ENCODE measurements at regions of chr3 and their contacts with region 1.

Region 1: DNA sequence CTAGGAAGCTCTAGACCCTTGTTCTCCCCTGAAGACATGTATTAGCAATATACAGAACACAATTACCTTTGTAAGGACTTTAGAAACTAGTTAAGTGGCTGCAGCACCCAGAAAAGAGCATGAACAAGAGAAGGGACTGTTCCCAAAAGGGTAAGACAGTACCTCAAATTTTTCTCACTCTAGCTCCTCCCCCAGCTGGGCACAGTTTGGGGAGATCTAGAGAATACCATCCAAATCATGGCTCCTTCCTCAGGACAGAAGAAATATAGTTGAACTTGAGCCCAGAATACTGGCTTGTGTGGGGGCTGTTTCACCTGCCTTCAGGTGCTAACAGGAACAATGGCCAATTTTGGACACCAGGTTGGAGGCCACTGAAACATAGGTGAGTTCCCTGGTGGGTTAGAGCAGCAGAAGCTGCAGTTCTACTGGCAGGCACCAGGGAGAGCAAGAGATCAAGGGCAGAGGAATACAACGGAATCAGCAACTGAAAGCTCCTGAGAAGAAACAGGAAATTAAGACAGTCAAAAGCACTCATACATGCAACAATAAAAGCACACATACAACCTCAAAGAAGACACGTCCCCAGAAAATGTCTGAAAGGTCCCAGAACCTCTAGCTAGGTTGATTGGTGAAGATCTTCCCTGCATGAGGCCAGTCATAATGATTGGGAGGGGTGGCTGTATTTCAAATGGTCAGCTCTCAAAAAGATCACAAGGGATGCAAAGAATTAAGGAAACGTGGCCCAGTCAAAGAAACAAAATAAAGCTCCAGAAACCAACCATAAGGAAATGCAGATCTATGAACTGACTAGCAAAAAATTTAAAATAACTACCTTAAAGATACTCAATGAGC is 104.9 kb upstream of the ASB14 start:
- DNase-seq: peak; percentile 20 to 74 (median 45)
- ATAC-seq: peak; percentile 93 to 99 (median 98)
- H3K4me3 ChIP-seq: no peak overlapping the region
- H3K4me3 Mint-ChIP-seq: peak overlapping the region; percentile 0 to 23 (median 4)
- H3K27ac ChIP-seq: no peak overlapping the region
- H3K27ac Mint-ChIP-seq: peak overlapping the region; percentile 14 to 77
- H3K4me1 ChIP-seq: peaks cover 0 to 3% of the 10 kb centered on the region in 2 experiments
- H3K4me1 Mint-ChIP-seq: peaks cover 16 to 17% (median 16%) of the 10 kb centered on the region in 3 donors
- H3K27me3 ChIP-seq: no peaks in the 10 kb centered on the region
- H3K27me3 Mint-ChIP-seq: no peaks in the 10 kb centered on the region

Region 2: DNA sequence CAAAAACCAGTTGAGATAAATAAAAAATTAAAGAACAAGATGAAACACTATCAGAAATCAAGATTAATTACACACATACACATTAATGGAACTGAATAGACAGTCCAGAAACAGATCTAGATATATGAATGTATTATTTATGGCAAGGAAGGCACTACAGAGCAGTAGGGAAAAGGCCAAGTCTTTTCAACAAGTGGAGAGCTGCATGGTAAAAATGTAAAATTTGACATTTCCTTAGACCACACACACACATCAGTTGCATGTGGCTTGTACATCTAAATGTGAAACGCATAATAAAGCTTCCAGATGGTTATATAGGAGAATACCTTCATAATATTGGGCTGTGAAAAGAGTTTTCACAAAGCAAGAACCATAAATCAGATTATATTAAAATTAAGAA is 47.1 kb before region 1 on chr3:
- CTCF ChIA-PET with region 1: interaction called in 1 of 2 experiments, 10 read pairs
- POLR2A ChIA-PET with region 1: no interaction called
- DNase-seq: no peak
- ATAC-seq: no peak
- H3K4me3 ChIP-seq: no peak overlapping the region
- H3K4me3 Mint-ChIP-seq: no peak overlapping the region
- H3K27ac ChIP-seq: no peak overlapping the region
- H3K27ac Mint-ChIP-seq: no peak overlapping the region
- H3K4me1 ChIP-seq: peaks cover 0 to 3% of the 10 kb centered on the region in 2 experiments
- H3K4me1 Mint-ChIP-seq: peaks cover 5 to 8% (median 7%) of the 10 kb centered on the region in 3 donors
- H3K27me3 ChIP-seq: no peaks in the 10 kb centered on the region
- H3K27me3 Mint-ChIP-seq: peaks cover 5 to 6% of the 10 kb centered on the region in 2 donors

Region 3: DNA sequence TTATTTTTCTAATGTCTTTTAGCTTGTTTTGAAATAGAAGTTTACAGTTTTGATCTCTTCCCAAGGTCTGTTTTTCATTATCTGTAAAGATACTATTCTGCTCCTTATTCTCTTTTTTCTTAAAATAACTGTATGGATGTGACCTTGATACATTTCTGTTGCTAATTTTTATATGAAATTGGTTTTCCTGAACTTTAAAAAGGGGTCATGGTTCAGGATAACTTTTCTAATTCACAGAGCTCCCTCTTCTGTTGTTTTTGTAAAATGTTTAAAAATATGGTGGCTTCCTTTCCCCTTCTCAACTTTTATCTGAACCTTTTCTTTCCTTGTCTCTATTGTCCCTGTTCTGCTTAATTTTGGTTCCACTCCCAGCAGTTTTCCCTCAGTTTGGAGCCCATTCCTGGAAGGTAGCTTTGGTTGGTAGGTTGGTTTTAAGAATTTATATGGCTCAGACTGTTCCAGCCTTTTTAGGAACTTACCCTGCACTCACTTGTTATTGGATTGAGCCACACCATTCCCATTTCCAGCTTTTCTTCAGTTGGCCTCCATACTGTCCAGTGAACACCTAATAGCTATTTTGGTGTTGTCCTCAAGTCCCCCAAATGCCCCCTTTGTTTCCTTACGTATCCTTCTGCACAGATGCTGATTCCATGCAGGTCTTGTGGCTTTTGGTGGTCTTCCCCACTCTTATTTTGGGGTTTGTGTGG is 429.0 kb after region 1 on chr3:
- CTCF ChIA-PET with region 1: interaction called in 1 of 2 experiments, 13 read pairs
- POLR2A ChIA-PET with region 1: no interaction called
- DNase-seq: no peak
- ATAC-seq: no peak
- H3K4me3 ChIP-seq: no peak overlapping the region
- H3K4me3 Mint-ChIP-seq: no peak overlapping the region
- H3K27ac ChIP-seq: no peak overlapping the region
- H3K27ac Mint-ChIP-seq: peak overlapping the region in 1 of 2 donors; percentile 40
- H3K4me1 ChIP-seq: peaks cover 0 to 2% of the 10 kb centered on the region in 2 experiments
- H3K4me1 Mint-ChIP-seq: peaks cover 14 to 41% (median 31%) of the 10 kb centered on the region in 3 donors
- H3K27me3 ChIP-seq: no peaks in the 10 kb centered on the region
- H3K27me3 Mint-ChIP-seq: no peaks in the 10 kb centered on the region

Region 4: GRCh38 chr3:57856675-57857074 is 459.3 kb after region 1 on chr3:
- CTCF ChIA-PET with region 1: interaction called, 4 to 23 read pairs
- POLR2A ChIA-PET with region 1: no interaction called
- DNase-seq: peak in 1 of 35 experiments; percentile 23
- ATAC-seq: no peak
- H3K4me3 ChIP-seq: no peak overlapping the region
- H3K4me3 Mint-ChIP-seq: no peak overlapping the region
- H3K27ac ChIP-seq: no peak overlapping the region
- H3K27ac Mint-ChIP-seq: no peak overlapping the region
- H3K4me1 ChIP-seq: no peaks in the 10 kb centered on the region
- H3K4me1 Mint-ChIP-seq: no peaks in the 10 kb centered on the region
- H3K27me3 ChIP-seq: no peaks in the 10 kb centered on the region
- H3K27me3 Mint-ChIP-seq: no peaks in the 10 kb centered on the region